ENCODE measurements at regions of chr19 and their contacts with region 1.

Region 1: DNA sequence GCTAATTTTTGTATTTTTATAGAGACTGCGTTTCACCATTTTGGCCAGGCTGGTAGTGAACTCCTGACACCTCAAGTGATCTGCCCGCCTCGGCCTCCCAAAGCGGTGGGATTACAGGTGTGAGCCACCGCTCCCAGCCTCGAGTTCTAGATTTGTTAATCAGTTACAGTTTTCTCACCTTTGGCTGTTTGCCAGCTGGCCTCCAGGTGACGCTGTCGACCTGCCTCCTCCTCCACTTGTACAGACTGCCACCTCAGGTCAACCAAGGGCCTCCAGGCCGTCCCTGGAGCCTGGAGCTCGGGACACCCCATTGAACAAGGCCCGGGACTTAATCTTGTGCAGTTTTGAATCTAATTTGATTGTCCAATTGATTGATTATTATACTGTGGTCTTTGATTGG is 45.5 kb downstream of the IER2 start:
- DNase-seq: peak in 1 of 2 experiments; percentile 36
- ATAC-seq: no peak
- H3K4me3 ChIP-seq: no peak overlapping the region
- H3K27ac ChIP-seq: 0 out of 6 replicates have a peak overlapping the region, but pooled peaks of 1 of the 2 experiments have one; percentile 23
- H3K4me1 ChIP-seq: 0 out of 3 replicates have a peak, but pooled peaks cover 5% of the 10 kb centered on the region
- CTCF ChIP-seq: no peak
- EP300 ChIP-seq: no peak
- POLR2A ChIP-seq: no peak
- RAD21 ChIP-seq: no peak

Region 2: DNA sequence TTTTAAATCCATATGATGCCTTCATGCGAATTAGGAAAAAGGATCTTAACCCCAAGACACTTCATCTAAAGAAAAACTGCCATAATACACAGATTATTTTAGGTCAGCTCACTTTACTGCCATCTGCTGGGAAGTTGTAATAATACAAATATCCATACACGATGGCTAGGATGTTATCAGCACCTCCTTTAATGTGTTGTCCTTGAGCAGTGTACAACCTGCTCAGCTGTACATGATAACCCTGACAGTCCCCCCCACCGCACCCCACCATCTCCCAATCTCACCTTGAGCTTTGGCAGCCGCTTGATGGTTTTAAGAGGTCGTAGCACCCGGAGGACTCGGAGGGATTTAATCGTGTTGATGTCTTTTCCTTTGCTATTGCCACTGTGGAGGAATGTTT is 66.8 kb after region 1 on chr19:
- CTCF ChIA-PET with region 1: interaction called, 16 read pairs
- POLR2A ChIA-PET with region 1: no interaction called
- DNase-seq: peak; percentile 43 to 45
- ATAC-seq: peak; percentile 44 to 75; a peak in 4 of 6 replicates
- H3K4me3 ChIP-seq: no peak overlapping the region
- H3K27ac ChIP-seq: peak overlapping the region in 1 of 2 experiments; percentile 5; a peak in 2 of 6 replicates
- H3K4me1 ChIP-seq: peaks cover 13% of the 10 kb centered on the region; the same call in 2 of the 3 replicates
- CTCF ChIP-seq: peak; percentile 61
- EP300 ChIP-seq: no peak
- POLR2A ChIP-seq: no peak
- RAD21 ChIP-seq: peak; percentile 59 to 69

Measured in A549 (cell line).